ENCODE measurements at regions of chr1 and their contacts with region 1.

Region 1: GRCh38 chr1:3677484-3677883 is 25.2 kb downstream of the TP73 start:
- DNase-seq: no peak
- ATAC-seq: no peak
- H3K4me3 ChIP-seq: no peak overlapping the region
- H3K4me3 Mint-ChIP-seq: no peak overlapping the region
- H3K27ac ChIP-seq: no peak overlapping the region
- H3K27ac Mint-ChIP-seq: no peak overlapping the region
- H3K4me1 ChIP-seq: peaks cover 0 to 30% of the 10 kb centered on the region in 2 experiments
- H3K4me1 Mint-ChIP-seq: peaks cover 4 to 34% (median 18%) of the 10 kb centered on the region in 3 donors
- H3K27me3 ChIP-seq: peaks cover 0 to 52% of the 10 kb centered on the region in 2 experiments
- H3K27me3 Mint-ChIP-seq: peaks cover 4 to 9% of the 10 kb centered on the region in 2 donors

Region 2: GRCh38 chr1:3691421-3692204 is 14.1 kb after region 1 on chr1:
- CTCF ChIA-PET with region 1: no interaction called
- POLR2A ChIA-PET with region 1: interaction called in 1 of 2 experiments, 11 read pairs
- DNase-seq: no peak
- ATAC-seq: no peak
- H3K4me3 ChIP-seq: no peak overlapping the region
- H3K4me3 Mint-ChIP-seq: no peak overlapping the region
- H3K27ac ChIP-seq: no peak overlapping the region
- H3K27ac Mint-ChIP-seq: no peak overlapping the region
- H3K4me1 ChIP-seq: peaks cover 0 to 8% of the 10 kb centered on the region in 2 experiments
- H3K4me1 Mint-ChIP-seq: peaks cover 0 to 2% (median 0%) of the 10 kb centered on the region in 3 donors
- H3K27me3 ChIP-seq: peaks cover 0 to 39% of the 10 kb centered on the region in 2 experiments
- H3K27me3 Mint-ChIP-seq: peaks cover 3 to 11% of the 10 kb centered on the region in 2 donors

Measured in T-cell (primary cell).